ENCODE measurements at regions of chr12 and their contacts with region 1.

Region 1: DNA sequence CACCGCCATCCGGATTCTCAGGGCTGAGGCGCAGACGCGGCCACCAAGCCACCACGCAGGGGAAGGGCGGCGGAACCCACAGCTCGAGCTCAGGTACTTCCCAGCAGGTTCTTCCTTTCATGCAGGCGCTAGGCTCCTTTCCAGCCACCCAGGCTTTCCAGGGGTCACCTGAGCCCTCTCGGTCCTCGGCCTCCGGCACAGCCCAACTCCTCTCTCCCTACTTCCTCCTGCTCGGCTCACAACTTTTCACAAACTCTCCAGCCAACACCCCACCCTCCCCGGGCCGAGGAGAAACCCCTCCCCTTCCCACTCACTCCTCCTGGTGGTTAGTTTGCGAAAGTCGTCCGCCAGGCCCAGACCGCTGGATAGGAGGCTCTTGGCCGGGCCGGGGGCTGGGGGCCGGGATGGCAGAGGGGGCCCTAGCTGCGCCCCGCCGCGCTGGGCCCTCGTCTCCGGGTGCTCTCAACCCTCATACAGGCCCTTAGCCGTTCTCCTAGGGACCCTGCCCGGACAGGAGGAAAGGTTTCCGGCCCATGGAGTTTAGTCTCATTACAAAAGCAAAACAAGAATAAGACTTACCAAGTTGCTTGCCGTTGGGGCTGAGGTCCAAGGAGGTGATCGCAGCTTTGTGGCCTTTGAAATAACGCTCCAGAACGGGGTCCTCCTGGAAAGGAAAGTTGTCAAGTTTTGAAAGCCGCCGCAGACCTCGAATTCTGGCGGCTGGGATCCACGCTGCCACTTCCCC is at the start of gene GALNT4:
- DNase-seq: peak; percentile 93
- H3K27ac ChIP-seq: peak within 1 kb of the TSS; percentile 90
- CTCF ChIP-seq: peak; percentile 73

Region 2: GRCh38 chr12:89019408-89020120 is 505.1 kb before region 1 on chr12:
- CTCF ChIA-PET with region 1: interaction called, 10 read pairs
- POLR2A ChIA-PET with region 1: no interaction called
- DNase-seq: peak; percentile 64
- H3K27ac ChIP-seq: no peak overlapping the region
- CTCF ChIP-seq: peak; percentile 89

Region 3: GRCh38 chr12:89280833-89281538 is 243.7 kb before region 1 on chr12:
- CTCF ChIA-PET with region 1: no interaction called
- POLR2A ChIA-PET with region 1: no interaction called
- DNase-seq: no peak
- H3K27ac ChIP-seq: no peak overlapping the region
- CTCF ChIP-seq: no peak

Region 4: DNA sequence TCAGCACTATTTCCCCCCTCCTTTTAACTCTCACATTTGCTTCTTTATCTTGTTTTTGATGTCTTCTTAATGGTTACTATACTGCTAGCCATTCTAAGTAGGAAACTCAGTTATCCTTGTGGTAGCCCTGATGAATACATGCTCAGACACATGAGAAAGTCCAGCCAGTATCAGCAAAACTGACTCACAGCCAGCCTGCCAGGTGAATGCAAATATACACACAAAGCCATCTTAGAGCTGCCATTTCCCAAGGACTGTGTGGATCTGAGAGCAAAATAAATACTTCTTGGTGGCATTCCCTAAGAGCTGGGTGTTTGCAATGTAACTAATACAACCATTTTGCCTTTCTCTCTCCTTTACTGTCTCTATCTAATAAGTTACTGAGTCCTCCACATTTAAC is 975.1 kb after region 1 on chr12:
- CTCF ChIA-PET with region 1: interaction called, 10 read pairs
- POLR2A ChIA-PET with region 1: no interaction called
- DNase-seq: no peak
- H3K27ac ChIP-seq: no peak overlapping the region
- CTCF ChIP-seq: no peak